ENCODE measurements at regions of chr1 and their contacts with region 1.

Region 1: DNA sequence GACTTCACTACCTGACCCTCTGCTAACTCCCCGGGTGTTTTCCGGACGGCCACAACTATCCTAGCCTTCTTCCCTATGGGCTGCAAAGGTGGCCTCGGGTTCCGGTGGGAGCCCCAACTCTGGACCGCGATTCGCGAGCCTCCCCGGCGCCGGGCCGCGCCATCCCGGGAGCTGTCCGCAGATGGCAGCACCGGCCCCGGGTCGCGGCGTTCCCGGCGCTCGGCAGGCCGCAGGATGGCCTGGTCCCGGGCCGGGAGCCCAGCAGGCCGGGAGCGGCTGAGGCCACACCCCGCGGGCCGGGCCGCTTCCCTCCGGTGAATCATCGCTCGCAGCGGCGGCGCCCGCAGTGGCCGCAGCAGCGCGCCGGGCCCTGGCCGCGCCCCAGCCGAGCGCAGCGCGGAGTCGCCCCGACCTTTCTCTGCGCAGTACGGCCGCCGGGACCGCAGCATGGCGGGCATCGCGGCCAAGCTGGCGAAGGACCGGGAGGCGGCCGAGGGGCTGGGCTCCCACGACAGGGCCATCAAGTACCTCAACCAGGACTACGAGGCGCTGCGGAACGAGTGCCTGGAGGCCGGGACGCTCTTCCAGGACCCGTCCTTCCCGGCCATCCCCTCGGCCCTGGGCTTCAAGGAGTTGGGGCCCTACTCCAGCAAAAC is at the start of gene CAPN2:
- DNase-seq: peak; percentile 96
- ATAC-seq: peak; percentile 48
- H3K4me3 ChIP-seq: peak within 1 kb of the TSS; percentile 92
- H3K27ac ChIP-seq: peak within 1 kb of the TSS; percentile 92
- H3K4me1 ChIP-seq: peaks cover 82% of the 10 kb centered on the region
- H3K27me3 ChIP-seq: no peaks in the 10 kb centered on the region
- CTCF ChIP-seq: peak; percentile 68
- total RNA-seq, gene CAPN2: 1,259 and 1,457 TPM in 2 replicates

Region 2: DNA sequence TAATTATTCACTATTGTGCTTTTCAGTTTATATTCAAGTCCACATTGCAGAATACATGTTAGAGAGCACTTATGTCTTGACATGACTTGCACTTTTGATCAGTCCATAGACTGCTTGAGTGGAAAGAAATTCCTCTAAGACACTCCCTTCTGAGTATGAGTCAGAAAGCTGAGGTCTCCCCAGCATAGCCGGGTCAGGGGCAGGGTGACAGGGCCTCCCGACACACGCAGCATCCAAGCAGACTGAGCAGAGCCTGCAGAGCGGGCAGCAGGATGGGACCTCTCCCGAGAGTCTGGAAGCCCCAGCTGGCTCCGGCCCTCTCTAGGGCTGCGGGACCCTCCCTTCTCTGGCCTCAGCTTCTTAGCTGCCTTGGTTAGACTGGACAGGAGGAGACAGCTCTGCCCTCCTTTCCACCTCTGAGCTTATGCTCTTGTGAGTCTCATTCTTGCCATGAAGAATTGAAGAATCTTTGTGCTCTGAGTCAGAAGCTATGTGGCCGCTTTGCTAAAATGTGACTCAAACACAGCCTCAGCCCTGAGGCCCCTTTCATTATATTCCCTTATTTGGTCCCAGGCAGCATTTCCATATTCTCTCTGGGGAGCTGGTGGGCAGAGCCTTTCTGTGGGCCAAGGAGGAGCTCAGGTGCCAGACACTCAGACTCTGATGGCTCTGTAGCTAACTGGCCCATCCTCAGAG is 11.2 kb before region 1 on chr1:
- CTCF ChIA-PET with region 1: interaction called, 8 read pairs
- POLR2A ChIA-PET with region 1: interaction called, 14 read pairs
- intact Hi-C with region 1: loop called (anchors 1 kb)
- DNase-seq: peak; percentile 99
- ATAC-seq: peak; percentile 76
- H3K4me3 ChIP-seq: peak overlapping the region; percentile 60
- H3K27ac ChIP-seq: peak overlapping the region; percentile 97
- H3K4me1 ChIP-seq: peaks cover 73% of the 10 kb centered on the region
- H3K27me3 ChIP-seq: no peaks in the 10 kb centered on the region
- CTCF ChIP-seq: no peak

Region 3: GRCh38 chr1:223732992-223733798 is 20.9 kb after region 1 on chr1:
- CTCF ChIA-PET with region 1: interaction called, 6 read pairs
- POLR2A ChIA-PET with region 1: interaction called, 4 read pairs
- intact Hi-C with region 1: loop called (anchors 2 kb)
- DNase-seq: peak; percentile 94
- ATAC-seq: peak; percentile 59
- H3K4me3 ChIP-seq: 0 out of 2 replicates have a peak overlapping the region, but pooled peaks have one; percentile 5
- H3K27ac ChIP-seq: peak overlapping the region; percentile 88
- H3K4me1 ChIP-seq: peaks cover 68% of the 10 kb centered on the region
- H3K27me3 ChIP-seq: no peaks in the 10 kb centered on the region
- CTCF ChIP-seq: no peak

Region 4: GRCh38 chr1:223771814-223772770 is 59.8 kb after region 1 on chr1:
- CTCF ChIA-PET with region 1: interaction called, 3 read pairs
- POLR2A ChIA-PET with region 1: no interaction called
- intact Hi-C with region 1: loop called (anchors 2 kb)
- DNase-seq: peak; percentile 93
- ATAC-seq: peak; percentile 66
- H3K4me3 ChIP-seq: peak overlapping the region; percentile 38
- H3K27ac ChIP-seq: peak overlapping the region; percentile 86
- H3K4me1 ChIP-seq: peaks cover 72% of the 10 kb centered on the region
- H3K27me3 ChIP-seq: no peaks in the 10 kb centered on the region
- CTCF ChIP-seq: no peak

Region 5: GRCh38 chr1:224061436-224061835 is 349.1 kb after region 1 on chr1:
- CTCF ChIA-PET with region 1: no interaction called
- POLR2A ChIA-PET with region 1: interaction called, 17 read pairs
- intact Hi-C with region 1: no loop called
- DNase-seq: no peak
- ATAC-seq: no peak
- H3K4me3 ChIP-seq: no peak overlapping the region
- H3K27ac ChIP-seq: no peak overlapping the region
- H3K4me1 ChIP-seq: peaks cover 70% of the 10 kb centered on the region
- H3K27me3 ChIP-seq: no peaks in the 10 kb centered on the region
- CTCF ChIP-seq: no peak

Region 6: DNA sequence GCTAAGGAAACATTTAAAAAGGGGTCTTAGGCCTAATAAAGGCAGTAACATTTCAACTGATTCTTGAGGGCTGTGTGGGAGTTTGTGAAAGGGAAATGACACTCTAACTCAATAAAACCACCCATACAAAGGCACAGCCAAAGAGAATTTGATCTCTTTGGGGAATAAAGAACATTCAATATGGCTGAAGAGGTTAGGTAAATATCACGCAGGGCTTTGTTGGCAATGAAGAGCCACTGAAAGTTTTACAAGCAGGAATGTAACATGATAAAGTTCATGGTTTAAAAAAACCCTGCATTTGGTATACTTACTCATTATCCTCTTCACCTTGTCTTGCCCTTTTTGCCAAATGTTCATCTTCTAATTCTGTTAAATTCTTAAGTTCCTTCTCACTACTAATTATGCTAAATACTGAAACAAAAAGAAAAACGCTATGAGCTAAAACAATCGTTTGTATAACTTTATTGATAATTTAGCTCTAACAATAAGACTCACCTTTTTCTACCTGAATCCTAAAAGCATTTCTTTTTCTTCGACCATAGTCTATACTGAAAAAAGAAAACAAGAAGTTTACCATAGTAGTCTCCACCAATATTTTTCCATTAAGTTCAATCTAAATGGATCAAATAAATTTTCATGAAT is 605.2 kb after region 1 on chr1:
- CTCF ChIA-PET with region 1: no interaction called
- POLR2A ChIA-PET with region 1: no interaction called
- intact Hi-C with region 1: no loop called
- DNase-seq: peak; percentile 42
- ATAC-seq: peak; percentile 85
- H3K4me3 ChIP-seq: no peak overlapping the region
- H3K27ac ChIP-seq: peak overlapping the region; percentile 6; the same call in 1 of the 2 replicates
- H3K4me1 ChIP-seq: peaks cover 4% of the 10 kb centered on the region; the same call in 1 of the 2 replicates
- H3K27me3 ChIP-seq: no peaks in the 10 kb centered on the region
- CTCF ChIP-seq: no peak